Naive thymus-derived CD4-positive, alpha-beta T cell (primary cell): ENCODE measurements at regions of chr22 and their contacts with region 1.

Region 1: DNA sequence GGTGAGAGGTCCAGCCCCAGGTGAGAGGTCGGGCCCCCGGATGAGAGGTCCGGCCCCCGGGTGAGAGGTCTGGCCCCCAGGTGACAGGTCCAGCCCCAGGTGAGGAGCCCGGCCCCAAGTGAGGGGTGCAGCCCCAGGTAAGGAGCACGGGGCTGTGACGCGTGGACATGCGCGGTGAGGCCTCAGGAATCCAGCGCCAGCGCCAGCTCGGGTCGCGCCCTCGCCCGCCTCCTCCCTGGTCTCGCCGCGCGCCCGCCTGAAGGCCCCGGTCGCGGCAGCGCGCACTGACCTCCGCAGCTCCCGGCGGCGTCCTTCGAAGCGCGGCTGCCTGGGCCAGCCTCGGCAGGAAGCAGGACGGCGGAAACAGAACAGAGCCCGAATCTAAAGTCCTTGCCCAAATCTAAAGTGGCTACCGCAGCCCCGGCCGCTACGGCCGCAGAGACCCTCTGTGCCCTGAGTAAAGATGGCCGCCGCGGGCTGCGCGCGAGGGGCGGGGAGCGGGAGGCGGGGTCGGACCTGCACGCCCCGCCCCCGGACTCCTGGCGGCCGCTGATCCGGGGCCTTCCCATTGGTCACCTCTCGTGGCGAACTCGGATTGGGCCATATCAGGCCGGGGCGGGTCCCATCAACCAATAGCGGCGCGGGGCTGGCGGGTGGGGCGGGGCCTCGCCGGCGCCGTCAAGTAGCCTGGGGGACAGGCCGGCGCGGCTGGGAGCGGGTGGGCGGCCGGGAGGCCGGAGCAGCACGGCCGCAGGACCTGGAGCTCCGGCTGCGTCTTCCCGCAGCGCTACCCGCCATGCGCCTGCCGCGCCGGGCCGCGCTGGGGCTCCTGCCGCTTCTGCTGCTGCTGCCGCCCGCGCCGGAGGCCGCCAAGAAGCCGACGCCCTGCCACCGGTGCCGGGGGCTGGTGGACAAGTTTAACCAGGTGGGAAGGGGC is at the starts of genes ALG12 and CRELD2:
- DNase-seq: peak; percentile 92 to 98 (median 95)
- ATAC-seq: peak; percentile 99
- H3K4me3 ChIP-seq: peak within 1 kb of the TSS; percentile 96
- H3K4me3 Mint-ChIP-seq: peak within 1 kb of the TSS; percentile 84 to 97 (median 88)
- H3K27ac ChIP-seq: peak within 1 kb of the TSS; percentile 97
- H3K27ac Mint-ChIP-seq: peak within 1 kb of the TSS; percentile 73 to 95 (median 91)
- H3K4me1 ChIP-seq: peaks cover 11 to 20% of the 10 kb centered on the region in 2 donors
- H3K4me1 Mint-ChIP-seq: peaks cover 0 to 36% (median 26%) of the 10 kb centered on the region in 7 donors
- H3K27me3 ChIP-seq: no peaks in the 10 kb centered on the region
- H3K27me3 Mint-ChIP-seq: no peaks in the 10 kb centered on the region
- total RNA-seq, gene ALG12: 16.2 to 22.4 (median 19.5) TPM
- total RNA-seq, gene CRELD2: 19.7 to 80.9 (median 28.5) TPM

Region 2: GRCh38 chr22:49789289-49790141 is 128.7 kb before region 1 on chr22:
- CTCF ChIA-PET with region 1: no interaction called
- POLR2A ChIA-PET with region 1: interaction called, 5 read pairs
- intact Hi-C with region 1: loop called in 1 of 2 experiments (anchors 1 kb)
- DNase-seq: peak in 7 of 9 donors; percentile 38 to 64 (median 54)
- ATAC-seq: peak; percentile 68
- H3K4me3 ChIP-seq: peak overlapping the region; percentile 12
- H3K4me3 Mint-ChIP-seq: peak overlapping the region; percentile 61 to 85 (median 78)
- H3K27ac ChIP-seq: peak overlapping the region; percentile 72
- H3K27ac Mint-ChIP-seq: peak overlapping the region; percentile 80 to 95 (median 92)
- H3K4me1 ChIP-seq: peaks cover 12 to 22% of the 10 kb centered on the region in 2 donors
- H3K4me1 Mint-ChIP-seq: peaks cover 32 to 69% (median 62%) of the 10 kb centered on the region in 7 donors
- H3K27me3 ChIP-seq: no peaks in the 10 kb centered on the region
- H3K27me3 Mint-ChIP-seq: no peaks in the 10 kb centered on the region

Region 3: GRCh38 chr22:49827853-49828598 is 90.2 kb before region 1 on chr22 and contains the start of gene BRD1:
- CTCF ChIA-PET with region 1: no interaction called
- POLR2A ChIA-PET with region 1: no interaction called
- intact Hi-C with region 1: loop called (anchors 1 to 2 kb)
- DNase-seq: peak in 8 of 9 donors; percentile 35 to 71 (median 52)
- ATAC-seq: peak; percentile 76
- H3K4me3 ChIP-seq: peak within 1 kb of the TSS; percentile 75
- H3K4me3 Mint-ChIP-seq: peak within 1 kb of the TSS; percentile 90 to 93 (median 92)
- H3K27ac ChIP-seq: peak within 1 kb of the TSS; percentile 95
- H3K27ac Mint-ChIP-seq: peak within 1 kb of the TSS; percentile 87 to 96 (median 94)
- H3K4me1 ChIP-seq: peaks cover 28 to 36% of the 10 kb centered on the region in 2 donors
- H3K4me1 Mint-ChIP-seq: peaks cover 33 to 63% (median 50%) of the 10 kb centered on the region in 7 donors
- H3K27me3 ChIP-seq: no peaks in the 10 kb centered on the region
- H3K27me3 Mint-ChIP-seq: peaks cover 0 to 12% (median 0%) of the 10 kb centered on the region in 5 donors
- total RNA-seq, gene BRD1: 50.0 to 130 (median 87.7) TPM

Region 4: GRCh38 chr22:49838771-49839717 is 79.2 kb before region 1 on chr22:
- CTCF ChIA-PET with region 1: no interaction called
- POLR2A ChIA-PET with region 1: interaction called, 3 read pairs
- intact Hi-C with region 1: loop called in 1 of 2 experiments (anchors 1 kb)
- DNase-seq: peak; percentile 63 to 96 (median 93)
- ATAC-seq: peak; percentile 99
- H3K4me3 ChIP-seq: peak overlapping the region; percentile 66
- H3K4me3 Mint-ChIP-seq: peak overlapping the region; percentile 61 to 86 (median 82)
- H3K27ac ChIP-seq: peak overlapping the region; percentile 100
- H3K27ac Mint-ChIP-seq: peak overlapping the region; percentile 88 to 98 (median 95)
- H3K4me1 ChIP-seq: peaks cover 14 to 18% of the 10 kb centered on the region in 2 donors
- H3K4me1 Mint-ChIP-seq: peaks cover 21 to 32% (median 28%) of the 10 kb centered on the region in 7 donors
- H3K27me3 ChIP-seq: no peaks in the 10 kb centered on the region
- H3K27me3 Mint-ChIP-seq: peaks cover 0 to 12% (median 0%) of the 10 kb centered on the region in 5 donors

Region 5: GRCh38 chr22:49882519-49883293 is 35.5 kb before region 1 on chr22:
- CTCF ChIA-PET with region 1: no interaction called
- POLR2A ChIA-PET with region 1: no interaction called
- intact Hi-C with region 1: no loop called
- DNase-seq: no peak
- ATAC-seq: no peak
- H3K4me3 ChIP-seq: no peak overlapping the region
- H3K4me3 Mint-ChIP-seq: no peak overlapping the region
- H3K27ac ChIP-seq: no peak overlapping the region
- H3K27ac Mint-ChIP-seq: peak overlapping the region in 2 of 9 donors; percentile 65 to 79
- H3K4me1 ChIP-seq: peaks cover 3 to 9% of the 10 kb centered on the region in 2 donors
- H3K4me1 Mint-ChIP-seq: peaks cover 21 to 41% (median 27%) of the 10 kb centered on the region in 7 donors
- H3K27me3 ChIP-seq: no peaks in the 10 kb centered on the region
- H3K27me3 Mint-ChIP-seq: no peaks in the 10 kb centered on the region

Region 6: DNA sequence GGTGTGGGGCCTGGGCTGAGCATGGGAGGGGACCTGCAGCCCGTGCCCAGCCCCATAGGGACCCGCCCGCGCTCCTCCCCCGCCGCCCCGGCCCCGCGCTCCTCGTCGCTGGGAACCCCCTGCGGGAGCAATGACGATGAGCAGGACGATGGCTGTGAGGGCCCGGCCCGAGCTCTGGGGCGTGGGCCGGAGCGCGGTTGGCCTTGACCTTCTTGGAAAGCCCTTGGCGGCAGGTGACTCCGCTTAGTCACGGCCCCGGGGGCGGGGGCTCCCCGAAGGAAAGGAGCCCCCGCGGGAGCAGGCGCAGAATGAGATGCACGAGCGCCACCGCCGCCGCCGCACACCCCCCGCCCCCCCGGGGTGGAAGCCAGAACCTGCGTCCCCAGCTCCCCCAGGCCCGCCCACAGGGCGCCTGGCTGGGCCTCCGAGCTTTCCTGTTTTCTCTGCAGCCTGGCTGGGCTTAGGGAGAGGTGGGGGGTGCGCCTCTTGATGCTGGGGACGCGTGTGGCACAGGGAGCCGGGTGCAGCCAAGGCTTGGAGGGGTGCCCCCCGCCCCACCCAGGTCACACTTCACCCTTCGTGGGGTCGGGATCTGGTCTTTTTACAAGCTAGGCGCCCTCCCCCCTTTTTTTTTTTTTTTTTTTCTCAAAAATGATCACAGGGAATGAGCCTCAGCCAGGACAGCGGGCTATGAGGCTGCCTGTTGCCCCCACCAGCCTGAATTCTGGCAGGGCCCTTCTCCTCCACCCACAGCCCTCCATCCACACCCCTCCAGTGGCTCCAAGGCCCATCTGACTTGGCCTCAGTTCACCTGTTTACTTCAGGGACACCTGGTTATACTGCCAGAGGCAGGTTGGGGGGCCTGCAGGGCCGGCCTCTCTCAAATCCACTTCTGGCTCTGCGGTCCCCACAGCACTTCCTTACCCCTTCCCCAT is 18.0 kb after region 1 on chr22:
- CTCF ChIA-PET with region 1: interaction called, 5 read pairs
- POLR2A ChIA-PET with region 1: interaction called, 3 read pairs
- intact Hi-C with region 1: loop called (anchors 1 to 2 kb)
- DNase-seq: peak; percentile 85 to 98 (median 91)
- ATAC-seq: peak; percentile 84
- H3K4me3 ChIP-seq: peak overlapping the region; percentile 41
- H3K4me3 Mint-ChIP-seq: peak overlapping the region; percentile 56 to 76 (median 73)
- H3K27ac ChIP-seq: peak overlapping the region; percentile 99
- H3K27ac Mint-ChIP-seq: peak overlapping the region; percentile 78 to 94 (median 91)
- H3K4me1 ChIP-seq: peaks cover 12 to 18% of the 10 kb centered on the region in 2 donors
- H3K4me1 Mint-ChIP-seq: peaks cover 6 to 31% (median 23%) of the 10 kb centered on the region in 7 donors
- H3K27me3 ChIP-seq: no peaks in the 10 kb centered on the region
- H3K27me3 Mint-ChIP-seq: no peaks in the 10 kb centered on the region

Region 7: GRCh38 chr22:50058906-50059880 is 141.0 kb after region 1 on chr22:
- CTCF ChIA-PET with region 1: no interaction called
- POLR2A ChIA-PET with region 1: no interaction called
- intact Hi-C with region 1: no loop called
- DNase-seq: no peak
- ATAC-seq: no peak
- H3K4me3 ChIP-seq: no peak overlapping the region
- H3K4me3 Mint-ChIP-seq: peak overlapping the region in 1 of 10 donors; percentile 19
- H3K27ac ChIP-seq: no peak overlapping the region
- H3K27ac Mint-ChIP-seq: no peak overlapping the region
- H3K4me1 ChIP-seq: no peaks in the 10 kb centered on the region
- H3K4me1 Mint-ChIP-seq: peaks cover 0 to 5% (median 0%) of the 10 kb centered on the region in 7 donors
- H3K27me3 ChIP-seq: peaks cover 0 to 7% of the 10 kb centered on the region in 2 donors
- H3K27me3 Mint-ChIP-seq: peaks cover 5 to 29% (median 23%) of the 10 kb centered on the region in 5 donors